ENCODE measurements at regions of chr3 and their contacts with region 1.

Region 1: DNA sequence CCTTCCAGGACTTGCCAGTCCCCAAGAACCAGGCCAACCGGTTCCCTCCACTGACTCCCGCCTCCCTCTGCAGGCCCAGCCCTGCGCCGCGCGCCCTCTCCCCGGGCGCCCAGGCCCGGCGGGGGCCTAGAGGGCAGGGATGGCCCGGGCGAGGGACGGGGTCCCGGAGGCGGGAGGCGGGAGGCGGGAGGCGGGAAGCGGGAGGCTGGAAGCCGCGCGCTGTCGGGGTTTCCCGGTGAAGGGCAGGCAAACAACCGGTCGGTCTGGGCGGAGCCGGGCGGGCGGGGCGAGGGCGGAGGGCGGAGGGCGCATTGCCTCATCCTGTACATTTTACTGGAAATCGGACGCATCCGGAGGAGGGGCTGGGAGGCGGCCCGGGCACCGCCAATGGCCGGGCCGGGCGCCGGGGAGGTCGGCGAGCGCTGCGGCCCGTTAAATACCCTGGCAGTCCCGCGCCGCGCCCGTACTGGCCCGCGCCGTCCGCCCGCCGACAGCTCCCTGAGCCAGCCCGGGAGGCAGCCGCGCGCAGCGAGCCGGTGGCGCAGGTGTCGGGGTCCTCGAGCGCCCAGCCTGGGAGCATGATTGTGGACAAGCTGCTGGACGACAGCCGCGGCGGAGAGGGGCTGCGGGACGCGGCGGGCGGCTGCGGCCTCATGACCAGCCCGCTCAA is at the start of gene NFKBIZ:
- DNase-seq: peak; percentile 84 to 97 (median 91)
- ATAC-seq: peak; percentile 66
- H3K4me3 ChIP-seq: peak within 1 kb of the TSS; percentile 79
- H3K4me3 Mint-ChIP-seq: peak within 1 kb of the TSS; percentile 99
- H3K27ac ChIP-seq: peak within 1 kb of the TSS; percentile 92 to 99
- H3K27ac Mint-ChIP-seq: peak within 1 kb of the TSS; percentile 100
- H3K4me1 ChIP-seq: peaks cover 24% of the 10 kb centered on the region
- H3K4me1 Mint-ChIP-seq: peaks cover 52% of the 10 kb centered on the region
- H3K27me3 ChIP-seq: no peaks in the 10 kb centered on the region
- H3K27me3 Mint-ChIP-seq: peaks cover 5% of the 10 kb centered on the region
- CTCF ChIP-seq: no peak
- total RNA-seq, gene NFKBIZ: 438 to 451 TPM

Region 2: DNA sequence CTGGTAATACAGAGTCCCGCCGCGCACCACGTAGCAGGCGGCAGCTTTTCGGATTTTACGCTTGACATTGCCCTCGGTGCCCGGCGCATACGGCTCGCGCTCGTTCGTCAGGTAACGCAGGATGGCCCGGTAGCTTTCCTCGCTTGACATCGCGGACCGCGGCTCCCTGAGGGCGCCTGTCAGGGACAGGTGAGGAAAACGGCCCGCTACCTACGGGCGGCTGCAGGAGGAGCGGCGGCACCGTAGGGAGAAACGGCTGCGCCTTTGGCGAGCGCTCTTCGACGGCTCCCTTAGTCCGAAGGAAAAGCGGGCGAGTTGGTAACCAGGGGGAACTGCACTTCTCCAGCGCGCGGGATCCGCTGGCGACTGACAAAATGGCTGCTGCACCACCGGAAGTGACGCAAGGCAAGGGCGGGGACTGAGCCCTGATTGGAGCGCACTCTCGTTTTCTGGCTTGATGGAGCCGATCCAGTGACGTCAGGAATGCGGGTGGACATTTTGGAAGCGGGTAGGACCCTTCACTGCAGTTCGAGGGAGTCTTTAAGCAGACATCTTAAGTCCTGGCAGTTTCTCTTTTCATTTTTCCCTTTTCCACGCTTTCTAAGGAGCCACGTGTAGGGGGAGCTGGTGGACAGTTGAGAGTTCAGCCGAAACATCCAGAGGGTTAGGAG is 172.3 kb before region 1 on chr3 and contains the start of gene ZBTB11:
- CTCF ChIA-PET with region 1: no interaction called
- POLR2A ChIA-PET with region 1: interaction called, 37 read pairs
- intact Hi-C with region 1: no loop called
- DNase-seq: peak; percentile 99 to 100 (median 100)
- ATAC-seq: peak; percentile 67
- H3K4me3 ChIP-seq: peak within 1 kb of the TSS; percentile 71
- H3K4me3 Mint-ChIP-seq: peak within 1 kb of the TSS; percentile 98
- H3K27ac ChIP-seq: peak within 1 kb of the TSS; percentile 97 to 99
- H3K27ac Mint-ChIP-seq: peak within 1 kb of the TSS; percentile 100
- H3K4me1 ChIP-seq: peaks cover 36% of the 10 kb centered on the region
- H3K4me1 Mint-ChIP-seq: peaks cover 60% of the 10 kb centered on the region
- H3K27me3 ChIP-seq: no peaks in the 10 kb centered on the region
- H3K27me3 Mint-ChIP-seq: peaks cover 3% of the 10 kb centered on the region
- CTCF ChIP-seq: no peak
- total RNA-seq, gene ZBTB11: 73.5 to 76.6 TPM

Region 3: DNA sequence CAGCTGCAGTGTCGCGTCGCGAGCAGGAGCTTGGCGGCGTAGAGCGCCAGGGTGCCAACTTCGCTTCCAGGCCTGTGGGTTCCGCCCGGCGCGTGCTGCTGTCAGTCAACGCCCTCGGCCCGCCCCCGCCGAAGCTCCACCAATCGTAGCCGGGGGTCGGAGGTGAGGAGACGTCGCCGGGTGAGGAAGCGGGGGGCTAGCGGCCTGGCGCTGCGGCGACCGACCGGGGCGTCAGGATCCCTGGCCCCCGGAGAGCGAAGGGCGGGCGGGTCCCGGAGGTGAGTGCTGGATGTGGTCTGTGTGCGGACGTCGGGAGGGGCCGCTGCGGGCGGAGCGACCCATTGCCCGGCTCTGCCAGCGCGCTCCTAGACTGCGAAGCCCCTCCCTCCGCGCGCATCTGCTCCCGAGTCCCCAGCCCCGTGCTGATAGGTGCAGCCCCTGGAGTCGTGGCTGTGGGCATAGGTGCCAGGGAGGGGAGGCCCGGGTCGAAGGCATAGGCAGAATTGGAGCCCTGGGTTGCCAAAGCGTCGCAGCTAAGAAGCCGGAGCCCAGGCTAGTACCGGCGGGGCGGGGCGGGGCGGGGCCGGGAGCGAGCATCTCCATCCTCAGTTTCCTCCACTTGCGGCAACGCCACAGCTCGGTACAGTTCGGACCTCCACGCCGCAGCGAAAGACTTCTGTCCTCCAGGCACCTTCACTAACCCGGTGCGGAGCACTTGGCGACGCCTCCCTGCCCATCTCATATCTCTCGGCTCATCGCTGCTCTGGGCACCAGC is 70.0 kb before region 1 on chr3 and contains the start of gene NXPE3:
- CTCF ChIA-PET with region 1: no interaction called
- POLR2A ChIA-PET with region 1: interaction called, 30 read pairs
- intact Hi-C with region 1: no loop called
- DNase-seq: peak; percentile 88 to 96 (median 93)
- ATAC-seq: peak; percentile 91
- H3K4me3 ChIP-seq: peak within 1 kb of the TSS; percentile 89
- H3K4me3 Mint-ChIP-seq: peak within 1 kb of the TSS; percentile 98
- H3K27ac ChIP-seq: peak within 1 kb of the TSS; percentile 87 to 89
- H3K27ac Mint-ChIP-seq: peak within 1 kb of the TSS; percentile 100
- H3K4me1 ChIP-seq: peaks cover 26% of the 10 kb centered on the region
- H3K4me1 Mint-ChIP-seq: peaks cover 62% of the 10 kb centered on the region
- H3K27me3 ChIP-seq: no peaks in the 10 kb centered on the region
- H3K27me3 Mint-ChIP-seq: no peaks in the 10 kb centered on the region
- CTCF ChIP-seq: no peak
- total RNA-seq, gene NXPE3: 37.4 to 37.5 TPM

Region 4: DNA sequence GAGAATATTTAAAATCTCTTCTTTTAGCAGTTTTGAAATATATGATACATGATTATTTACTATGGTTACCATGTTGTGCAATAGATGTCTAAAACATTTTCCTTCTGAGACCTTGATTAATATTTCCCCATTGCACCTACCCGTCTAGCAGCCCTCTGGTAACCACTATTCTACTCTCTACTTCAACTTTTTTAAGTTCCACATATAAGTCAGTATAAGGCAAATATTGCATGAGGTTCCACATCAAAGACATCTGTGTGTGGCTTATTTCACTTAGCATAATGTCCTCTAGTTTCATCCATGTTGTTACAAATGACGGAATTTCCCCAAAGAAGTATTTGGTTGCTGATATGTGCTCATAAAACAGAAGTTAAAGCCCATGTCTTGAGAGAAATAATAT is 29.4 kb before region 1 on chr3:
- CTCF ChIA-PET with region 1: interaction called, 6 read pairs
- POLR2A ChIA-PET with region 1: interaction called, 44 read pairs
- intact Hi-C with region 1: loop called (anchors 5 kb)
- DNase-seq: peak in 2 of 14 experiments; percentile 43 to 53
- ATAC-seq: no peak
- H3K4me3 ChIP-seq: no peak overlapping the region
- H3K4me3 Mint-ChIP-seq: no peak overlapping the region
- H3K27ac ChIP-seq: no peak overlapping the region
- H3K27ac Mint-ChIP-seq: no peak overlapping the region
- H3K4me1 ChIP-seq: peaks cover under 1% of the 10 kb centered on the region
- H3K4me1 Mint-ChIP-seq: peaks cover 30% of the 10 kb centered on the region
- H3K27me3 ChIP-seq: no peaks in the 10 kb centered on the region
- H3K27me3 Mint-ChIP-seq: no peaks in the 10 kb centered on the region
- CTCF ChIP-seq: no peak

Region 5: DNA sequence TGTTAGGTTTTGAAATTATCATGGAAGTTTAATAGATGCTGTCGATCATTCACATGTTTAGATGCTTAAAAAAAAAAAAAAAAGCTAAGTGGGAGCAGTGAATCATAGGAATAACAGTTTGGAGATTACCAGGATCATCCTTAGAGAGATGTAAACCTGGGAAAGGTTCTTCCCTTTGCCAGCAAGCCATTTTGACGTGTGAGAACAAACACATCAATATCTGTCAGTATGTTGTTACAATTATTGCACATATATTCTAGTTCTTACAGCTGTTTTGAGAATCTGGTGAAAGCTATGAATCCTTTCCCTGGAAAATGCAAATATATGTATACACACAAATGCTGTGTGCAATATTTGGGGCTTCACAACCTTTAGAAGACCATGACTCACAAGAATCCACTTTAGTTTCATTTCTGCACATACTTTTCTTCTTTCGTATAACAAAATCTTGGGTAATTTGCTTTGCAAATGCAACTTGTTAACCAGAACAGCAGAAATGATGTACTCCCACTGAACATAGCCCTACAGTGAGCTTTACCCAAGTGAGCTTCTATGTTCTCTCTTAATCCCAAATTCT is 12.1 kb after region 1 on chr3:
- CTCF ChIA-PET with region 1: interaction called, 4 read pairs
- POLR2A ChIA-PET with region 1: interaction called, 11 read pairs
- intact Hi-C with region 1: loop called in 1 of 2 experiments (anchors 1 kb)
- DNase-seq: no peak
- ATAC-seq: peak; percentile 9
- H3K4me3 ChIP-seq: no peak overlapping the region
- H3K4me3 Mint-ChIP-seq: no peak overlapping the region
- H3K27ac ChIP-seq: no peak overlapping the region
- H3K27ac Mint-ChIP-seq: peak overlapping the region; percentile 4
- H3K4me1 ChIP-seq: peaks cover 7% of the 10 kb centered on the region
- H3K4me1 Mint-ChIP-seq: peaks cover 31% of the 10 kb centered on the region
- H3K27me3 ChIP-seq: no peaks in the 10 kb centered on the region
- H3K27me3 Mint-ChIP-seq: no peaks in the 10 kb centered on the region
- CTCF ChIP-seq: no peak

Region 6: DNA sequence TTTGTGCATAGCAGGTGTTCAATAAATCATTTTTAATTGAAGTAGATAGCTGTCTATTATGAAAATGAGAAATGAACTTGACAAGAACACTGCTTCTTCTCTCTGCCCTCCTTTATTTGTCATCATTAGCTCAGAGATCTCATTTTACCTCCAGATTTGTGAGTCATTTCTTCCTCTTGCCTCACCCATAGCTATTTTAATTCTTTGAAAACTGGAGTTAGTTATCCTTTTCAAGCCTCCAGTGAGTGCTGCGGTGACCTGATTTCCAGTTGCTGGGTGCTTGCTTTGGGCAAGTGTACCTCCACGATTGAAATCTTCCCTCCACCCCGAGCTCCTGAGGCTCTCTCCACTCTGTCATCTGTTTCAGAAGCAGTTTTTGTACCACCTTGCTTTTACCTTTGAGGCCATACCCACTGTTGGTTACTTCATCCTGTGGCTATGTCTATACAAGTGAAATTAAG is 114.7 kb after region 1 on chr3:
- CTCF ChIA-PET with region 1: no interaction called
- POLR2A ChIA-PET with region 1: no interaction called
- intact Hi-C with region 1: no loop called
- DNase-seq: peak in 2 of 14 experiments; percentile 6 to 14
- ATAC-seq: no peak
- H3K4me3 ChIP-seq: no peak overlapping the region
- H3K4me3 Mint-ChIP-seq: no peak overlapping the region
- H3K27ac ChIP-seq: no peak overlapping the region
- H3K27ac Mint-ChIP-seq: no peak overlapping the region
- H3K4me1 ChIP-seq: peaks cover 4% of the 10 kb centered on the region
- H3K4me1 Mint-ChIP-seq: no peaks in the 10 kb centered on the region
- H3K27me3 ChIP-seq: no peaks in the 10 kb centered on the region
- H3K27me3 Mint-ChIP-seq: no peaks in the 10 kb centered on the region
- CTCF ChIP-seq: no peak

Region 7: DNA sequence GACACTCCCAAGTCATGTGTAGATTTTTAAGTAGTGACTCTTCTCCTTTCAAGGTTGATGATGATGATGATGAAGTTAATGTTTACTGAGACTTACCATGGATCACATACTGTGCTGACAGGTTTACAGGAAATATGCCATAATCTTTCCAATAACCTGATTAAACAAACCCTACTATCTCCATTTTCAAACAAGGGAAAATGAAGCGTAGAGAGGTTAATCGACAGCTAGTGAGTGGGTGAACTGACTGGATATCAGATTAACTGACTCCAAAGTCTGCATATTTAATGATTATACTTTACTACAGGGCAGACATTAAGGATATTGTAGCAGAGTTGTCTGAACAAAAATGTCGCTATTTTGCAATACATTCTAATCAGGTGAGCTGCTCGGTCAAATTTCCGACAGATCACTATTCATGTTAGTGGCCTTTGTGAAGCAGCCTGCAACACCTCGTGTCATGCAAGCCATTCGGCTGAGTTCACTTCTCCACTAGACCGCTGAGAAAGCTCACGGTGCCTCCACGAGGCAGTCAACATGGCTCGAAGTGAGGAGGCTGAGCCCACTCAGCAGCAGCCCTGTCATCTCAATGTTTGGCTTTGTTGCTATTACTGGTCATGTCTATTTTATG is 264.3 kb after region 1 on chr3:
- CTCF ChIA-PET with region 1: no interaction called
- POLR2A ChIA-PET with region 1: interaction called, 9 read pairs
- intact Hi-C with region 1: loop called in 1 of 2 experiments (anchors 2 kb)
- DNase-seq: peak in 2 of 14 experiments; percentile 5 to 17
- ATAC-seq: no peak
- H3K4me3 ChIP-seq: no peak overlapping the region
- H3K4me3 Mint-ChIP-seq: peak overlapping the region; percentile 6
- H3K27ac ChIP-seq: peak overlapping the region in 1 of 2 donors; percentile 61
- H3K27ac Mint-ChIP-seq: peak overlapping the region; percentile 88
- H3K4me1 ChIP-seq: peaks cover 11% of the 10 kb centered on the region
- H3K4me1 Mint-ChIP-seq: peaks cover 49% of the 10 kb centered on the region
- H3K27me3 ChIP-seq: no peaks in the 10 kb centered on the region
- H3K27me3 Mint-ChIP-seq: no peaks in the 10 kb centered on the region
- CTCF ChIP-seq: no peak

Region 8: GRCh38 chr3:102229062-102229655 is 380.0 kb after region 1 on chr3:
- CTCF ChIA-PET with region 1: interaction called, 3 read pairs
- POLR2A ChIA-PET with region 1: interaction called, 29 read pairs
- intact Hi-C with region 1: loop called in 1 of 2 experiments (anchors 5 kb)
- DNase-seq: peak; percentile 51 to 88 (median 72)
- ATAC-seq: peak; percentile 92
- H3K4me3 ChIP-seq: no peak overlapping the region
- H3K4me3 Mint-ChIP-seq: no peak overlapping the region
- H3K27ac ChIP-seq: no peak overlapping the region
- H3K27ac Mint-ChIP-seq: no peak overlapping the region
- H3K4me1 ChIP-seq: peaks cover 3% of the 10 kb centered on the region
- H3K4me1 Mint-ChIP-seq: peaks cover 17% of the 10 kb centered on the region
- H3K27me3 ChIP-seq: no peaks in the 10 kb centered on the region
- H3K27me3 Mint-ChIP-seq: no peaks in the 10 kb centered on the region
- CTCF ChIP-seq: peak; percentile 93

Measured in CD4-positive, alpha-beta T cell (primary cell).